Dorsolateral prefrontal cortex (tissue), 120 donors: ENCODE measurements at regions of chr12 and their contacts with region 1.

Region 1: DNA sequence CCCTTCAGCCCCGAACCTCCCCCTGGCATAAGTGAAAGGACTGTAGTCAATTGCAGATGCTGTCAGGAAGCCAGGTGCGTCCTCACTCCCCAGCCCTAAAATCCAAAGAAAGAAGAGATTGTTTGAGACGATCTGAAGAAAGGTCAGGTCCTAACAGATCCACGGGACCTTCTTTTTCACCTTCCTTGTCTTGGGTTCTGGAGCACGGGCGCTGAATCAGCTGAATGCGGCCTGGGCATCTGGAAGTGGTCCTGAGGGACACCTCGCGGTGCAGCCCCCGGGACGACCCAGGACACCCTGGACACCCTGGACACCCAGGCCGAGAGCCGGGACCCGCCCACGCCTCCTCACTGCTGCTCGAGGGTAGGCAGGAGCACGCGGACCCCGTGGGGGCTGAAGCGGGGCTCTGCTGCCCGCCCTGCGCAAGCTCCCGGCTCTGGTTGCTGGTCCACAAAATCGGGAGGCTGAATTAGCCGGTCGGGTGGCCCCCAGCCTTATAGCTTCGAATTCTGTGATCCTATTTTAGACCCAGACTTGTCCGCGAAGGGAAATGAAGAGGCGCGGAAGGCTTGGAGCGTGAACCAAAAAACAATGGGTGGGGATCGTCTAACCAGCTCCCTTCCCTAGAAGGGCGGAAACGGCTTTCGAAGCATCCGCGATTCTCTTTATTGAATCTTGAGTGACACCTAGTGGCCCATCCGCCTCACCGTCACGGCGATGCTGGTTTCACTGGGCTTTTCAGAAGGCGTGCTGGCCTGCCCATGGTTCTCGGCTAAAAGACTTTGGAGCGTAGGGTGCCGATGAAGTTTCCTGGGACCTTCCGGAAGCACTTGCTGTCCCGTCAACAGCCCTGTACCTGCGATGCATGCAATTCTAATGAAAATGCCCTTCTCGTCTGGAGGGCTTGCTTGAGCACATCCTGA is 46.4 kb upstream of the PLXNC1 start:
- DNase-seq: peak; percentile 69 to 93 (median 86)
- H3K4me3 ChIP-seq: peak overlapping the region; percentile 39 to 86 (median 66)
- H3K27ac ChIP-seq: peak overlapping the region in 19 of 59 donors; percentile 3 to 81 (median 48)
- H3K27me3 ChIP-seq: peaks cover 0 to 14% (median 0%) of the 10 kb centered on the region in 45 donors
- CTCF ChIP-seq: peak; percentile 57 to 94 (median 88)

Region 2: GRCh38 chr12:93502802-93503623 is 599.0 kb before region 1 on chr12:
- intact Hi-C with region 1: loop called (anchors 2 to 5 kb)
- DNase-seq: peak in 4 of 10 donors; percentile 26 to 48 (median 34)
- H3K4me3 ChIP-seq: no peak overlapping the region
- H3K27ac ChIP-seq: no peak overlapping the region
- H3K27me3 ChIP-seq: no peaks in the 10 kb centered on the region
- CTCF ChIP-seq: peak; percentile 68 to 91 (median 83)

Region 3: DNA sequence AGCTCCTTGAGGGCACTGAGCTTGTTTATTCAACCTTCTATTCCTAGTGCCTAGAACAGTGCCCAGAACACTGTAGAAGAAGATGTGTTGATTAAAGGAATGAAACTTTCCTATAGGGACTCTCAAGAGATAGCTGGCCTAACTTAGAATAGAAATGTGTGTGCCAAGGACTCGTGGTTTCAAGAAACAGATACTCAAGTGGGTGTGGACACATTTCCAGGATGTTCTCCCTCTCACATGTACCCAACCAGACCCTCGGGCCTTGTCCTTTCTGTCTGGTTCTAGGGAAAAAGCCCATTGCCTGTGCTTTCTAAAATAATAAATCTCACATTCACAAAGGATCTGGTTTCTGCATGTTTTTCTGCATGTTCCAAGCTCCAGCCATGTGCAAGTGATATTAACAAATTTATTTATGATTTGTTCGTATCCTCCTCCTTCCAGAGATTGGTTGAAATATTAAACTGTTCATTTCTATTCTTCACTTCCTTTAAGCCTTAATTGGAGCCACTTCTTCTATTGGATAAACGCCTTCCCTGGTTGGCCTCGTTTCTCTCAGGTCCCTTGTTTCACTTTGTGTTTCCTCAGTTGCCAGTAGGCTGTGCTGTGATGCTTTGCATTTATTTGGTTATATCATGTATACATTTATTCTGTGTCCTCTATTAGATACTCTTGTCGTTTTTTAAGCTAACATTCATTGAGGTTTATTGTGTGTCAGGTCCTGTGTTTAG is 335.0 kb before region 1 on chr12:
- intact Hi-C with region 1: loop called (anchors 1 to 2 kb)
- DNase-seq: peak in 2 of 10 donors; percentile 46 to 71
- H3K4me3 ChIP-seq: no peak overlapping the region
- H3K27ac ChIP-seq: peak overlapping the region in 9 of 59 donors; percentile 14 to 48 (median 29)
- H3K27me3 ChIP-seq: no peaks in the 10 kb centered on the region
- CTCF ChIP-seq: peak; percentile 22 to 82 (median 63)

Region 4: DNA sequence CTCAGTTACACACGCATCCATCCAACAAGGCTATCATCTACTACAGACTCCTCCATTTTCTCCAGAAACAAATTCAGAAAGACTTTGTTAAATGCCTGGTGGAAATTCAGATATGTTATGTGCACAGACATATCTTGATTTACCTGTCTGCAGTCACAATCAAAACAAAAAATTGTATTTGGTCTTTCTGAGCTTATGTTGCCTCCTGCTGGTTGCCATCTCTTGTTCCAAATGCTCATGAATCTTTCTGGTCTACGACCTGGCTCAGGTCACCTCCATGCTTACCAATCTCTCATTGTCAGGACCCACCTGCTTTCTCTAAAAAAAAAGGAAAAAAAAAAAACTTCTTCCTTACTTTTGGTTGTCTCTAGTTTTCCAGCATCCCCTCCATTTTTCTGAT is 122.8 kb before region 1 on chr12:
- intact Hi-C with region 1: loop called in 1 of 2 experiments (anchors 5 kb)
- DNase-seq: no peak
- H3K4me3 ChIP-seq: no peak overlapping the region
- H3K27ac ChIP-seq: no peak overlapping the region
- H3K27me3 ChIP-seq: no peaks in the 10 kb centered on the region
- CTCF ChIP-seq: peak in 45 of 56 donors; percentile 2 to 56 (median 37)